ENCODE measurements at regions of chr14 and their contacts with region 1.

Region 1: DNA sequence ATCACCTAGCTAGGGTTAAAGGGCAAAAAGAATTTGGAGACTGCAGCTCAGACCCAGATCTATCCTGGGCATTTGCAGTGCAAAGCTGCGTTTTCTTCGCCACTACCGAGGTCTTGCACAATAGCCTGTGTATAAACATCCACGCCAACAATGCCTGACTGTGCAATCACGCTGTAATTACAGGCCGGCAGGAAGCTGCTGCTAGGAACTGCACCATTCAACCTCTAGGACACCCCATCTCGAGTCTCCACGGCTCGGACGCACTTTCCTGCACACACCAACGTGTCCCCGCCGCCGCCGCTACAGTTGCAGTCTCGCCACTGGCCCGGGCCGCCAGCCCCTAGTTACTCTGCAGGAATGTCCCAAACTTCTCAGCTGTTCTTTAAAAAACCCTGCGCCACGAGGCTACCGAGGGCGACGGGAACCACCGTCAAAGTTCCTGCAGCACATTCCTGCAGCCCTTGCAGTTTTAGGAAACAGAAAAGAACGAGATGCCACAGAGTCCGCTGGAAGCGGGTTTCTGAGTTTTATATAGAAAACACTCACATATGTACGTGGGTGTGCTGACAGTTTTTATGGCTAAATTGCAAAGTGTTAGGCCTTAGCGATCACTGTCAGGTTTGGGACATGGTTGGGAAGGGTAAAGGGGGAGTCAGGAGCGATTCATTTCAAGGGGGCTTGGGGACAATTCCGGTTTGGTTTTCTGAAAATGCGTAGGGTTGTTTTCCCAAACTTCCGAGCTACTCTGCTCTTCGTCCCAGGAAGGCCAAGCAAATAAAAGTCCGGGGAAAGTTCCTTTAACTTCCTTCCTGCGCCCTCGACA is 65.5 kb upstream of the PTGR2 start:
- DNase-seq: peak; percentile 78
- H3K4me3 Mint-ChIP-seq: peak overlapping the region; percentile 80
- H3K27ac Mint-ChIP-seq: peak overlapping the region; percentile 94
- H3K4me1 Mint-ChIP-seq: peaks cover 57% of the 10 kb centered on the region
- H3K27me3 Mint-ChIP-seq: no peaks in the 10 kb centered on the region

Region 2: GRCh38 chr14:73713803-73714655 is 72.1 kb before region 1 on chr14 and contains the start of gene PNMA1:
- CTCF ChIA-PET with region 1: no interaction called
- POLR2A ChIA-PET with region 1: interaction called, 17 read pairs
- DNase-seq: peak; percentile 88
- H3K4me3 Mint-ChIP-seq: peak within 1 kb of the TSS; percentile 91
- H3K27ac Mint-ChIP-seq: peak within 1 kb of the TSS; percentile 88
- H3K4me1 Mint-ChIP-seq: peaks cover 22% of the 10 kb centered on the region
- H3K27me3 Mint-ChIP-seq: no peaks in the 10 kb centered on the region
- total RNA-seq, gene PNMA1: 28.2 to 30.0 TPM

Region 3: DNA sequence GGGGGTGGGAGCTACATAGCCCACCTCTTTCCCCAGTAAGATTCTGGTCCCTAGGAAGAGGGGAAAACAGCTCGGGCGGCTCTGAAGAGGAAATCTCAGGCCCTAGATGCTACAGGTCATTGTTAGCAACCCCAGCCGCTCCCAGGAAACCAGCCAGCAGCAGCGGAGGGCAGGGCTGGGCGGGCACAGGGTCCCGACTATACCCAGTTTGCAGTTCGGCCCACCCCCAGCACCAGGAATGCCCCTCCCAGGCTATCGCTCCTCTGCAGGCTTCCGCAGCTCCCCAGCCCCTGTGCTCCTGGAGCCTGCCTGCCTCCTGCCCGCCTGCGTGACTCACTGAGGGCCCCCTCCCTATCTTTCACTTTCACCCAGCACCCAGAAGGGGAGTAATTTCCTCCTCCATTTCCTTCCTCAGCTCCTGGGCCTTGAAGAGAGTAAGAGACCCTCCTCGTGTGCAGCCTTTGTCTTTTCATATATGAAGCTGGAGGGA is 44.7 kb before region 1 on chr14:
- CTCF ChIA-PET with region 1: interaction called, 5 read pairs
- POLR2A ChIA-PET with region 1: interaction called, 79 read pairs
- DNase-seq: peak; percentile 75
- H3K4me3 Mint-ChIP-seq: peak overlapping the region; percentile 76
- H3K27ac Mint-ChIP-seq: peak overlapping the region; percentile 98
- H3K4me1 Mint-ChIP-seq: peaks cover 74% of the 10 kb centered on the region
- H3K27me3 Mint-ChIP-seq: no peaks in the 10 kb centered on the region

Region 4: GRCh38 chr14:73753959-73754882 is 31.9 kb before region 1 on chr14:
- CTCF ChIA-PET with region 1: interaction called, 76 read pairs
- POLR2A ChIA-PET with region 1: interaction called, 236 read pairs
- DNase-seq: peak; percentile 67
- H3K4me3 Mint-ChIP-seq: peak overlapping the region; percentile 86
- H3K27ac Mint-ChIP-seq: peak overlapping the region; percentile 82
- H3K4me1 Mint-ChIP-seq: peaks cover 95% of the 10 kb centered on the region
- H3K27me3 Mint-ChIP-seq: no peaks in the 10 kb centered on the region

Region 5: GRCh38 chr14:73771848-73772638 is 14.0 kb before region 1 on chr14:
- CTCF ChIA-PET with region 1: interaction called, 33 read pairs
- POLR2A ChIA-PET with region 1: interaction called, 131 read pairs
- DNase-seq: peak; percentile 73
- H3K4me3 Mint-ChIP-seq: peak overlapping the region; percentile 12
- H3K27ac Mint-ChIP-seq: peak overlapping the region; percentile 80
- H3K4me1 Mint-ChIP-seq: peaks cover 71% of the 10 kb centered on the region
- H3K27me3 Mint-ChIP-seq: no peaks in the 10 kb centered on the region

Region 6: GRCh38 chr14:73851644-73852382 is 65.7 kb after region 1 on chr14 and contains the start of gene PTGR2:
- CTCF ChIA-PET with region 1: interaction called, 3 read pairs
- POLR2A ChIA-PET with region 1: interaction called, 26 read pairs
- DNase-seq: peak; percentile 88
- H3K4me3 Mint-ChIP-seq: peak within 1 kb of the TSS; percentile 98
- H3K27ac Mint-ChIP-seq: peak within 1 kb of the TSS; percentile 95
- H3K4me1 Mint-ChIP-seq: peaks cover 22% of the 10 kb centered on the region
- H3K27me3 Mint-ChIP-seq: peaks cover 5% of the 10 kb centered on the region
- total RNA-seq, gene PTGR2: 2.3 to 2.8 TPM

Measured in activated CD4-positive, alpha-beta memory T cell treated with anti-CD3 and anti-CD28 coated beads, Interleukin-2, amount 10 ng/mL, durations not matched to agents 7 days and 5 days (primary cell).